BJ (cell line): ENCODE measurements at regions of chr3 and their contacts with region 1.

Region 1: GRCh38 chr3:159322322-159322939 is 520.6 kb downstream of the MFSD1 start:
- DNase-seq: no peak
- H3K4me3 ChIP-seq: no peak overlapping the region
- H3K27me3 ChIP-seq: no peaks in the 10 kb centered on the region
- CTCF ChIP-seq: peak; percentile 87

Region 2: DNA sequence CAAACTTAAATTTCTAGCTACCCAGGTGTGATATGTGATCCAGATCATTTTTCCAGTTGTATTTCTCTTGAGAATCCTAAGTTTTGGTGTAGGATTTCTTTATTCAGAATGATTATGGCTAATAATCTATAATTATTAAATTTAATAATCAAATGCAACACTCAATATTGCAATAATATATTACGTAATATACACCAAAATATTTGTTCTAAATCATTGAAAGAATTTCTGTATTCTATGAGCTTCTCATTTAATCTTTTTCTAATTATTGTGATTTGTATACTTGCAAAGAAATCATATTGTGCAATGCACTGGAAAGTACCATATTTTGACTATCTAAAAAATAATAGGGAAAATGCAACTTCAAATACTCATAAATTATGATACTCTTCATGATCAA is 11.0 kb before region 1 on chr3:
- CTCF ChIA-PET with region 1: interaction called, 19 read pairs
- POLR2A ChIA-PET with region 1: no interaction called
- DNase-seq: no peak
- H3K4me3 ChIP-seq: no peak overlapping the region
- H3K27me3 ChIP-seq: no peaks in the 10 kb centered on the region
- CTCF ChIP-seq: no peak